Activated CD4-positive, alpha-beta memory T cell treated with anti-CD3 and anti-CD28 coated beads for 36 hours (primary cell): ENCODE measurements at regions of chr1 and their contacts with region 1.

Region 1: GRCh38 chr1:246699095-246699735 is 25.0 kb upstream of the SCCPDH start:
- DNase-seq: peak; percentile 92
- H3K4me3 Mint-ChIP-seq: peak overlapping the region; percentile 49
- H3K27ac Mint-ChIP-seq: no peak overlapping the region
- H3K4me1 Mint-ChIP-seq: peaks cover 6% of the 10 kb centered on the region
- H3K27me3 Mint-ChIP-seq: no peaks in the 10 kb centered on the region

Region 2: GRCh38 chr1:246618240-246618808 is 80.9 kb before region 1 on chr1:
- CTCF ChIA-PET with region 1: no interaction called
- POLR2A ChIA-PET with region 1: no interaction called
- intact Hi-C with region 1: no loop called
- DNase-seq: no peak
- H3K4me3 Mint-ChIP-seq: no peak overlapping the region
- H3K27ac Mint-ChIP-seq: no peak overlapping the region
- H3K4me1 Mint-ChIP-seq: peaks cover 5% of the 10 kb centered on the region
- H3K27me3 Mint-ChIP-seq: no peaks in the 10 kb centered on the region

Region 3: GRCh38 chr1:246641394-246641793 is 57.8 kb before region 1 on chr1:
- CTCF ChIA-PET with region 1: no interaction called
- POLR2A ChIA-PET with region 1: no interaction called
- intact Hi-C with region 1: no loop called
- DNase-seq: no peak
- H3K4me3 Mint-ChIP-seq: no peak overlapping the region
- H3K27ac Mint-ChIP-seq: no peak overlapping the region
- H3K4me1 Mint-ChIP-seq: peaks cover 3% of the 10 kb centered on the region
- H3K27me3 Mint-ChIP-seq: no peaks in the 10 kb centered on the region

Region 4: DNA sequence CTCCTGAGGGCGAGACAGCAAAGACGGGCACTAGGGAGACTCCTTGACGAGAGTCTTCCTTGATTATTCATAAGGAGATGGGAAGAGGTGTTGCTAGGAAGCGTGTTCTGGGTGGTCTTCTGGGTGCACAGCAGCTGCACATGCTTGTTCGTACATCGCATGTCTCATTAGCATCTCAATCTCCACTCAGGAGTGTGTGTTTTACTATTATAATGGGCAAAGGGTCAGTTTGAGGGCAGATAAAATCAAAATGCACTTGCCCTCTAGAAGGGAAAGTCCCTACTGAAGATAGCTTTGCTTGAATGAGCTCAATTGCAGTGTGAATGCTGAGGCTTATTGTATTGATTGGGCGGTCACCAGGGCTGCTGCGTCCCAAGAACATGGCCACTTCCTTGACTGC is 25.2 kb before region 1 on chr1:
- CTCF ChIA-PET with region 1: no interaction called
- POLR2A ChIA-PET with region 1: no interaction called
- intact Hi-C with region 1: no loop called
- DNase-seq: no peak
- H3K4me3 Mint-ChIP-seq: no peak overlapping the region
- H3K27ac Mint-ChIP-seq: no peak overlapping the region
- H3K4me1 Mint-ChIP-seq: no peaks in the 10 kb centered on the region
- H3K27me3 Mint-ChIP-seq: no peaks in the 10 kb centered on the region

Region 5: DNA sequence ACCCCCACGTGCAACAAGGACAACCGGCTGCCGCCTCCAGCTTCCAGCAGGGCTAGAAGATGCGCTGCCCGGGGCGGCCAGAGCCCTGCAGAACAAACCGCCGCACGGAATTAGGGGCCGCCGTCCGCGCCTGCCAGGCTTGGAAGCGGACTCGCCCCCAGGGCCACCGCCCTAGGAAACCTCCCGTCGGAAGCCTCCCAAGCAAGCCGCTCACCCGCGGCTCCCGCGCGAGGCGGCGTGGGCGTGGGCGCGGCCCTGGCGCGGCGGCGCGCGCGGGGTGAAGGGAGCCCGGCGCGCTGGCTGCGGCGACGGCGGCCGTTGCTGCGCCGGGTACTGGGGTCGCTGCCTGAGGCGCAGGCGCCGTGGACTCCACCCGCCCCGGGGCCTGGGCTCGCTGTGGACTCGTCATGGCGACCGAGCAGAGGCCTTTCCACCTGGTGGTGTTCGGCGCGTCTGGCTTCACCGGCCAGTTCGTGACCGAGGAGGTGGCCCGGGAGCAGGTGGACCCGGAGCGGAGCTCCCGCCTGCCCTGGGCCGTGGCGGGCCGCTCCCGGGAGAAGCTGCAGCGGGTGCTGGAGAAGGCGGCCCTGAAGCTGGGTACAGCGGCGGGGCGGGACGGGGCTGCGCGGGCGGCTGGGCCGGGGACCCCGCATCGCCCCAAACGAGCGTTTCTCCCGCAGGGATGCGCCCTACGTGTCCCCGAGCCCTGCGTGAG is 25.0 kb after region 1 on chr1 and contains the start of gene SCCPDH:
- CTCF ChIA-PET with region 1: no interaction called
- POLR2A ChIA-PET with region 1: interaction called, 3 read pairs
- intact Hi-C with region 1: loop called (anchors 2 kb)
- DNase-seq: peak; percentile 76
- H3K4me3 Mint-ChIP-seq: peak within 1 kb of the TSS; percentile 82
- H3K27ac Mint-ChIP-seq: peak within 1 kb of the TSS; percentile 66
- H3K4me1 Mint-ChIP-seq: peaks cover 7% of the 10 kb centered on the region
- H3K27me3 Mint-ChIP-seq: peaks cover 5% of the 10 kb centered on the region
- total RNA-seq, gene SCCPDH: 21.5 to 22.5 TPM

Region 6: GRCh38 chr1:246753670-246754535 is 54.7 kb after region 1 on chr1:
- CTCF ChIA-PET with region 1: interaction called, 4 read pairs
- POLR2A ChIA-PET with region 1: no interaction called
- intact Hi-C with region 1: loop called (anchors 1 kb)
- DNase-seq: peak; percentile 71
- H3K4me3 Mint-ChIP-seq: no peak overlapping the region
- H3K27ac Mint-ChIP-seq: no peak overlapping the region
- H3K4me1 Mint-ChIP-seq: no peaks in the 10 kb centered on the region
- H3K27me3 Mint-ChIP-seq: no peaks in the 10 kb centered on the region